GM12878 (cell line): ENCODE measurements at regions of chr4 and their contacts with region 1.

Region 1: DNA sequence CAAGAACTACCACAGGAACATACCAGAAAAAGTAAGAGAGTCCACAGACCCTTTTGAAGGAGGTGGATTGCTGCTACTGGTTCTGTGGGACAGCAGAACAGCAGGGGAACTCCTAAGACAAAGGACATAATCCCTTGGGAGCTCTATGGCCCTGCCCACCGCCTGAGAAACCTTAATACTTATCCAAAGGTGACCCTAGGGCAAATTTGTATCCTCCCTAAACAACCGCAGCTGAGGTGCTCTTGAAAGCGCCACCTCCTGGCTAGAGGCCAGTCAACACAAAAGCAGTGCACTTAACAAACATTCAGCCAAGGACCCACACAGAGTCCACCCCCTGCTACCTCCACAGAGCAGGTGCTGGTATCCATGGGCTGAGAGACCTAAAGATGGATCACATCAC is 136.8 kb downstream of the ADAM29 start:
- DNase-seq: no peak
- ATAC-seq: peak; percentile 98
- H3K4me3 ChIP-seq: no peak overlapping the region
- H3K27ac ChIP-seq: no peak overlapping the region
- H3K4me1 ChIP-seq: no peaks in the 10 kb centered on the region
- H3K27me3 ChIP-seq: no peaks in the 10 kb centered on the region
- CTCF ChIP-seq: peak in 2 of 3 experiments; percentile 37 to 60; a peak in 4 of 6 replicates
- EP300 ChIP-seq: no peak
- POLR2A ChIP-seq: no peak
- RAD21 ChIP-seq: peak; percentile 29; the same call in 1 of the 2 replicates

Region 2: GRCh38 chr4:174880001-174880400 is 175.0 kb before region 1 on chr4:
- CTCF ChIA-PET with region 1: interaction called, 48 read pairs
- POLR2A ChIA-PET with region 1: interaction called, 3 read pairs
- RAD21 ChIA-PET with region 1: interaction called, 5 read pairs
- SMC1A ChIA-PET with region 1: interaction called, 21 read pairs
- in situ Hi-C with region 1: no loop called
- intact Hi-C with region 1: no loop called
- DNase-seq: no peak
- ATAC-seq: no peak
- H3K4me3 ChIP-seq: no peak overlapping the region
- H3K27ac ChIP-seq: no peak overlapping the region
- H3K4me1 ChIP-seq: no peaks in the 10 kb centered on the region
- H3K27me3 ChIP-seq: no peaks in the 10 kb centered on the region
- CTCF ChIP-seq: no peak
- EP300 ChIP-seq: no peak
- POLR2A ChIP-seq: no peak
- RAD21 ChIP-seq: no peak

Region 3: DNA sequence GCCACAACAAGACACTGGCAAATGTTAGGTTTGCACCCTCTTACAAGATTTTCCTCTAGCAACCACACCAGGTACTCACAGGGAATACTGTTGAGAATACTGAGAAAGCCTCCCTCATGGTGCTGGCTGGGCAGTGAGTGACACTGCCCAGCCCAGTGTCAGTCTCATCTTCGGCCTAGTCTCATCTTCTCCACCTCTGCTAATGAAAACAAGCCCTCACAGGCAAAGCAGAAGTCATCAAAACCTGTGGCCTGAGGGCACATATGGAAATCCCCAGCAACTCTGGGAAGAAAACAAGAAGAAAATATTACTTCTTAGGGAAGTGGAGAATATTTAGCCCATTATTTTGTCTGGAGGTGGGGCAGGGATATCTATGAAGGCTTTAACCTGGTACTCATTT is 144.7 kb before region 1 on chr4:
- CTCF ChIA-PET with region 1: no interaction called
- POLR2A ChIA-PET with region 1: no interaction called
- RAD21 ChIA-PET with region 1: no interaction called
- SMC1A ChIA-PET with region 1: no interaction called
- in situ Hi-C with region 1: no loop called
- intact Hi-C with region 1: no loop called
- DNase-seq: no peak
- ATAC-seq: peak; percentile 71
- H3K4me3 ChIP-seq: no peak overlapping the region
- H3K27ac ChIP-seq: no peak overlapping the region
- H3K4me1 ChIP-seq: no peaks in the 10 kb centered on the region
- H3K27me3 ChIP-seq: no peaks in the 10 kb centered on the region
- CTCF ChIP-seq: no peak
- EP300 ChIP-seq: no peak
- POLR2A ChIP-seq: no peak
- RAD21 ChIP-seq: no peak

Region 4: DNA sequence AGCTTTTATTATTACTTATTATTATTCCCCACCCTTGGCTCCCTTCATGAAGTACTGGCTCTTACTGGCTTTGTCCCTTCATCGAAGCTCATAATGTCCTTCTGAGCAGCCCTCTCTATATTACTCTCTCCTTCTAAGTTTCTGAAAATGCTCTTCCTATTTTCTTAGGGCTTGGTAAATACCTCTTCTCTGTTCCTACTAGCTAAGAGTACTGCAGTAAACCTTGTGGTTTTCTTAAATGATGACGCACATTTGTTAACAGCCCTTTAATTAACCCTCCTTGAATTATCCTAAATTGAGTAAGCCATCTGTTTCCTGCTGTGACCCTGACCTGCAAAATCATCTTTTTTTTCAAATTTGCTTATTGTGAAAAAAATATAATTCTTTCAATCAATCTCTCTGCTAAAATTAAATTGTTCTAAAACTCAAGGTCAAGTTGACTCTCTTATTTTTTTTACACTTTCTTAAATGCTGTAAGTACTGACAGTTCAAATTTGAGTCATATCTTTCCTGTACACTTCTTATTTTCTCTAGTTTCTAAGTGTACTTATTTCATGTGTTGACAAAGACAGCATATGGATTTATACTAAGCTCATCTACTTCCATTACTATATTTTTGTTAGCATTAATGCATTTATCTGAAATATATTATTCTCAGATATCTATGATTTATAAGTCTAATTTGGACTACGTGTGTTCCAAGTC is 12.1 kb after region 1 on chr4:
- CTCF ChIA-PET with region 1: interaction called, 10 read pairs
- POLR2A ChIA-PET with region 1: no interaction called
- RAD21 ChIA-PET with region 1: interaction called, 4 read pairs
- SMC1A ChIA-PET with region 1: interaction called, 5 read pairs
- in situ Hi-C with region 1: no loop called
- intact Hi-C with region 1: no loop called
- DNase-seq: no peak
- ATAC-seq: peak; percentile 55
- H3K4me3 ChIP-seq: no peak overlapping the region
- H3K27ac ChIP-seq: no peak overlapping the region
- H3K4me1 ChIP-seq: no peaks in the 10 kb centered on the region
- H3K27me3 ChIP-seq: no peaks in the 10 kb centered on the region
- CTCF ChIP-seq: no peak
- EP300 ChIP-seq: no peak
- POLR2A ChIP-seq: no peak
- RAD21 ChIP-seq: no peak

Region 5: DNA sequence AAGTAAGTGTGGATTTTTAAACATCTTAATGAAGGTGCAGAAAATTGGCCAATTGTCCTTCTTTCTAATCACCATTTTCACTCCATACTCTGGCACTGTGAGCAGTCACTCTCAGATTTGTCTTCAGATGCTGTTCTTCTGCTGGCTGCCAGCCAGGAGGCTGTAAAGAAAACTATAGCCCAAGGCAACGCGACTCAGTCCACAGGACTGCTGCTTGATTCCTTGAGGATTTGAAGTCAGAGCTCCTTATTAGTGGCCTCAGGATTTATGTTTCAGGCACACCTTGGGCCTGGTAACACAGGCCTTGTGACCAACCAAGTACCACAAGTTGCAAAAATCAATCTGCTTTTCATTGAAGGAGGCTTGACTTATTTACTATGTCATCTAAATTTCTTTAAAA is 414.5 kb after region 1 on chr4:
- CTCF ChIA-PET with region 1: no interaction called
- POLR2A ChIA-PET with region 1: no interaction called
- RAD21 ChIA-PET with region 1: no interaction called
- SMC1A ChIA-PET with region 1: no interaction called
- in situ Hi-C with region 1: no loop called
- intact Hi-C with region 1: no loop called
- DNase-seq: no peak
- ATAC-seq: no peak
- H3K4me3 ChIP-seq: no peak overlapping the region
- H3K27ac ChIP-seq: no peak overlapping the region
- H3K4me1 ChIP-seq: no peaks in the 10 kb centered on the region
- H3K27me3 ChIP-seq: no peaks in the 10 kb centered on the region
- CTCF ChIP-seq: no peak
- EP300 ChIP-seq: no peak
- POLR2A ChIP-seq: no peak
- RAD21 ChIP-seq: no peak